ENCODE measurements at regions of chr11 and their contacts with region 1.

Region 1: GRCh38 chr11:116787786-116788486 is at the start of gene ZPR1:
- DNase-seq: peak; percentile 89
- ATAC-seq: peak; percentile 84
- H3K4me3 Mint-ChIP-seq: peak within 1 kb of the TSS; percentile 94
- H3K27ac Mint-ChIP-seq: peak within 1 kb of the TSS; percentile 92
- H3K4me1 Mint-ChIP-seq: peaks cover 49% of the 10 kb centered on the region
- H3K27me3 Mint-ChIP-seq: peaks cover 6% of the 10 kb centered on the region
- total RNA-seq, gene ZPR1: 60.5 to 62.0 TPM

Region 2: GRCh38 chr11:116687458-116688201 is 100.3 kb before region 1 on chr11:
- CTCF ChIA-PET with region 1: no interaction called
- POLR2A ChIA-PET with region 1: no interaction called
- DNase-seq: no peak
- ATAC-seq: no peak
- H3K4me3 Mint-ChIP-seq: no peak overlapping the region
- H3K27ac Mint-ChIP-seq: no peak overlapping the region
- H3K4me1 Mint-ChIP-seq: no peaks in the 10 kb centered on the region
- H3K27me3 Mint-ChIP-seq: peaks cover 16% of the 10 kb centered on the region

Region 3: GRCh38 chr11:116772443-116773202 is 15.3 kb before region 1 on chr11 and contains the start of gene BUD13:
- CTCF ChIA-PET with region 1: interaction called, 20 read pairs
- POLR2A ChIA-PET with region 1: interaction called, 44 read pairs
- DNase-seq: peak; percentile 95
- ATAC-seq: peak; percentile 93
- H3K4me3 Mint-ChIP-seq: peak within 1 kb of the TSS; percentile 97
- H3K27ac Mint-ChIP-seq: peak within 1 kb of the TSS; percentile 97
- H3K4me1 Mint-ChIP-seq: peaks cover 46% of the 10 kb centered on the region
- H3K27me3 Mint-ChIP-seq: no peaks in the 10 kb centered on the region
- total RNA-seq, gene BUD13: 36.3 to 39.5 TPM

Region 4: GRCh38 chr11:116808386-116809194 is 20.7 kb after region 1 on chr11:
- CTCF ChIA-PET with region 1: interaction called, 16 read pairs
- POLR2A ChIA-PET with region 1: no interaction called
- DNase-seq: no peak
- ATAC-seq: no peak
- H3K4me3 Mint-ChIP-seq: no peak overlapping the region
- H3K27ac Mint-ChIP-seq: no peak overlapping the region
- H3K4me1 Mint-ChIP-seq: no peaks in the 10 kb centered on the region
- H3K27me3 Mint-ChIP-seq: peaks cover 12% of the 10 kb centered on the region

Region 5: GRCh38 chr11:116879800-116880625 is 92.1 kb after region 1 on chr11:
- CTCF ChIA-PET with region 1: interaction called, 16 read pairs
- POLR2A ChIA-PET with region 1: no interaction called
- DNase-seq: peak; percentile 55
- ATAC-seq: peak; percentile 75
- H3K4me3 Mint-ChIP-seq: no peak overlapping the region
- H3K27ac Mint-ChIP-seq: peak overlapping the region; percentile 20
- H3K4me1 Mint-ChIP-seq: peaks cover 2% of the 10 kb centered on the region
- H3K27me3 Mint-ChIP-seq: no peaks in the 10 kb centered on the region

Region 6: DNA sequence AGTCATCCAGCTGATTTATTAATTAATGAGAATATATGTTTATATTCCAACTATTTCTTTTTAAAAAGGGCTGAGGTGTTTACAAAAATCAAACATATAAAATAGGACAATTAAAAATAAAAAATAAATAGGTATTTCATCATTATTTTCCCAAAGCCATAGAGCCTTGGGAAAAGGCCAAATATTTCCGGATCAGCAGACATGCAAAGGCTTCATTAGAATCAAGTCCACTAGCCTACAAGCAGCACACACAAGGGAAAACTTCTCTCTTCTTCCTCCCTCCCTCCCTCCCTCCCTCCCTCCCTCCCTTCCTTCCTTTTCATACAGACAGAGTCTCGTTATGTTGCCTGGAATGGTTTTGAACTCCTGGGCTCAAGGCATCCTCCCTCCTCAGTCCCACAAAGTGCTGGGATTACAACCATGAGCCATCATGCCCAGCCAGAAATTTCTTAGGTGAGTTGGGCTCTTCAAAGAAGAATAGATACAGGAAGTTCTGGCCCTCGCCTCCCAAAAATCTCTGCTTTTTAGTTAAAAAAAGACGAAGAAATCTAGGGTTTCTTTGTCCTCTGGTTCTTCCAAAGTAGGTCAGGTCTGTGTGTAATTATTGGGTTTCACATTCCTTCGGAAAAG is 189.1 kb after region 1 on chr11:
- CTCF ChIA-PET with region 1: no interaction called
- POLR2A ChIA-PET with region 1: no interaction called
- DNase-seq: no peak
- ATAC-seq: no peak
- H3K4me3 Mint-ChIP-seq: no peak overlapping the region
- H3K27ac Mint-ChIP-seq: no peak overlapping the region
- H3K4me1 Mint-ChIP-seq: peaks cover 16% of the 10 kb centered on the region
- H3K27me3 Mint-ChIP-seq: no peaks in the 10 kb centered on the region

Region 7: DNA sequence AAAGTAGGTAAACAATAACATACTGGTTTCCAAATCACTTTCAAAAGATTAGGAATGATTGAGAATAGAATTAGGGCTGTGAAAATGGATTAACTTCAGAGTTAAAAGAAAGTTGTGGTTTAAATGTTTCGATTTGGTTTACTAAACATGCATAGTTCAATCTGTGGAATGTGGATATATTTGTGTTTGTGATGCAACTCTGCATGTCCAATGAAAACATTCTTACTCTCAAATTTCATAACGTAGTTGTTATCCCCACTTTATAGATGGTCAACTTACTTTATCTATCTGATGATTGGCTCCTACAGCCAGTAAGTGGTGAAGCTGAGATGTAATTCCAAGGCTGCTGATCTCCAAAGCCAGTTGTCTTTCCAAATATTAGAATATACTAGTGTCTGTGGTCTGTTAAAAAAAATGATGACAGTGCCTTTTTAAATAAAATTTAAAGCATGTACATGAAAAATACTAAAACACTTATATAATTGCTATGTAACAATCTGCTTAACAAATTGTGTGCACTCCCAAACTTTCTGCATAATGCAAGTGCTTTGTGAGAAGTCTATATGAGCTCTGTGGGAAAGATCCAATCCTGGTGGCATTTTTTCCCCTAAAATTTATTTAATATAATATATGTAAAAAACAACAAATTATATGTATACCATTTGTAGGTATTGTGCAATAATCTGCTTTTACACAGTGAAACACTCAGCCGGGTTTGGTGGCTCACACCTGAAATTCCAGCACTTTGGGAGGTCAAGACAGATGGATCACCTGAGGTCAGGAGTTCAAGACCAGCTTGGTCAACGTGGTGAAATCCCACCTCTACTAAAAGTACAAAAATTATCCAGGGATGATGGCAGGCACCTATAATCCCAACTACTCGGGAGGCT is 320.0 kb after region 1 on chr11:
- CTCF ChIA-PET with region 1: interaction called, 37 read pairs
- POLR2A ChIA-PET with region 1: no interaction called
- DNase-seq: no peak
- ATAC-seq: no peak
- H3K4me3 Mint-ChIP-seq: no peak overlapping the region
- H3K27ac Mint-ChIP-seq: no peak overlapping the region
- H3K4me1 Mint-ChIP-seq: peaks cover 5% of the 10 kb centered on the region
- H3K27me3 Mint-ChIP-seq: peaks cover 2% of the 10 kb centered on the region